ENCODE measurements at regions of chr4 and their contacts with region 1.

Region 1: GRCh38 chr4:168923526-168924194 is 86.4 kb downstream of the CBR4 start:
- DNase-seq: peak in 1 of 2 experiments; percentile 62
- H3K4me3 ChIP-seq: no peak overlapping the region
- H3K27ac ChIP-seq: no peak overlapping the region
- H3K4me1 ChIP-seq: peaks cover 0 to 14% (median 9%) of the 10 kb centered on the region in 4 experiments; a peak in 4 of 7 replicates
- H3K27me3 ChIP-seq: peaks cover 0 to 1% (median 0%) of the 10 kb centered on the region in 4 experiments; a peak in 1 of 7 replicates
- CTCF ChIP-seq: peak in 2 of 3 experiments; percentile 74 to 81; a peak in 3 of 4 replicates
- EP300 ChIP-seq: no peak
- POLR2A ChIP-seq: no peak
- RAD21 ChIP-seq: peak; percentile 84 to 85

Region 2: DNA sequence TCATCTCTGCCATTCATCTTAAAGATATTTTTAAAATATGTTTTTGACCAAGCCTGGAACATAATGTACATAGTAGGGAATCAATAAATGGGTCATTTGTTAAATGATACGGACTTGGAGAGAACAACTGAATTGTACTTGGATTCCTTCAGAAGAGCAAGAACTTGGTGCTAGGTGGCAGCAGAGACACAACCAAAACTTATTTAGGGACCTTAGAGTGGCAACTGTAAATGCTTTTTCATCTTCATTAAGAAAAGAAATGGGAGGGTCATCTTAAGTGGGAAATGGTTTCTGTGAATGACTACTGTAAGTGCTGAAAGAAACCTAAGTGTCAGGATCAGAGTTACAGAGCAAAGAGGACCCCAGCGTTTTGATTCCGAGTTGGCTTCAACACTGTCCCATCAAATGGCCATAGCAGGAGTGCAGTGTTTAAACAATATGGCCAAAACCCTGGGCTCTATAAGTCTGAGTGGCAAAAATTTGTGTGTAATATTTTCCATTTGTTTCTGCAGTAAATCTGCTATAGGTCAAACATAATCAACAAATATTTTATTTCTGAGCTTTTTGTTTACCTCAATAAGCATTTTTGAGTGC is 213.2 kb before region 1 on chr4:
- CTCF ChIA-PET with region 1: interaction called, 84 read pairs
- POLR2A ChIA-PET with region 1: no interaction called
- DNase-seq: no peak
- H3K4me3 ChIP-seq: no peak overlapping the region
- H3K27ac ChIP-seq: no peak overlapping the region
- H3K4me1 ChIP-seq: no peaks in the 10 kb centered on the region
- H3K27me3 ChIP-seq: peaks cover 0 to 3% (median 0%) of the 10 kb centered on the region in 4 experiments; a peak in 2 of 7 replicates
- CTCF ChIP-seq: peak in 2 of 3 experiments; percentile 54 to 66; a peak in 3 of 4 replicates
- EP300 ChIP-seq: no peak
- POLR2A ChIP-seq: no peak
- RAD21 ChIP-seq: peak; percentile 83 to 87

Region 3: DNA sequence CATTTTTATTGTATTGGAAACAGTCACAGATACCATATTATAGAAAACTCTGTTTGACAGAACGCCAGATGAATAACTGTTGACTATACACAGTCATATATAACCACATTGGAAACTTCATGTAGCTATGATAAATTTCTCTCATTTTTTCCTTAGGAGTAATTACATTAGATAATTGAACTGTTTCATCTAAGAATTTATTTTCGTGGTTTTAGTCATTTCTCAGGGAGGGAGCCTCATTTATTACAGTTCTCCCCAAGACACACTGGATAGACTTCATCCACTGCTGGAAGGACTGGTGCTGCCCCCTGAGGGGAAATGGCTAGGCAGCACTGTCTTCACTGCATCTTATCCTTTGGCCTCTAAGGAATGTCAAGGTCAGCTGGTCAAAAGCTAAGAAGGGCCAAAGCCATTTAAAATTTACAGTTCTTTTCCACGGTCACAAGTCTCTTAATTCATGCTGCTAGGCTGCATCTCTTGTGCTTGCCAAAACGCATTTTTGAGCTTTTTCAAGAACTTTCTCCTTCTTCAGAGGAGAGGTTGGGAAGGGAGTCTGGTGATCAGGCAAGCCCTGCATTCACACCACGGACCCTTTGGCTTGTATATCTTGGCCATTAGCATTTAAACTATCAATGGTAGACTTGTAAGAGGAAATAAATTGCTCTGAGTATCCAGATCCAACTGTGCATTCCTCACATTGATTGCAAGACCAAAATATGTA is 58.7 kb before region 1 on chr4:
- CTCF ChIA-PET with region 1: interaction called, 12 read pairs
- POLR2A ChIA-PET with region 1: no interaction called
- DNase-seq: no peak
- H3K4me3 ChIP-seq: no peak overlapping the region
- H3K27ac ChIP-seq: no peak overlapping the region
- H3K4me1 ChIP-seq: peaks cover 0 to 8% (median 4%) of the 10 kb centered on the region in 4 experiments; a peak in 2 of 7 replicates
- H3K27me3 ChIP-seq: no peaks in the 10 kb centered on the region
- CTCF ChIP-seq: peak; percentile 48 to 64 (median 63)
- EP300 ChIP-seq: no peak
- POLR2A ChIP-seq: no peak
- RAD21 ChIP-seq: peak; percentile 67 to 72

Region 4: GRCh38 chr4:168907119-168907698 is 16.5 kb before region 1 on chr4:
- CTCF ChIA-PET with region 1: interaction called, 60 read pairs
- POLR2A ChIA-PET with region 1: no interaction called
- DNase-seq: no peak
- H3K4me3 ChIP-seq: no peak overlapping the region
- H3K27ac ChIP-seq: no peak overlapping the region
- H3K4me1 ChIP-seq: no peaks in the 10 kb centered on the region
- H3K27me3 ChIP-seq: no peaks in the 10 kb centered on the region; a peak in 1 of 7 replicates
- CTCF ChIP-seq: no peak
- EP300 ChIP-seq: no peak
- POLR2A ChIP-seq: no peak
- RAD21 ChIP-seq: no peak

Region 5: GRCh38 chr4:168978001-168978700 is 54.5 kb after region 1 on chr4:
- CTCF ChIA-PET with region 1: interaction called, 14 read pairs
- POLR2A ChIA-PET with region 1: no interaction called
- DNase-seq: no peak
- H3K4me3 ChIP-seq: no peak overlapping the region
- H3K27ac ChIP-seq: no peak overlapping the region
- H3K4me1 ChIP-seq: no peaks in the 10 kb centered on the region
- H3K27me3 ChIP-seq: no peaks in the 10 kb centered on the region
- CTCF ChIP-seq: no peak
- EP300 ChIP-seq: no peak
- POLR2A ChIP-seq: no peak
- RAD21 ChIP-seq: no peak

Region 6: GRCh38 chr4:169010125-169011023 is 86.7 kb after region 1 on chr4 and contains the start of gene CBR4:
- CTCF ChIA-PET with region 1: interaction called, 38 read pairs
- POLR2A ChIA-PET with region 1: interaction called, 3 read pairs
- DNase-seq: peak; percentile 88 to 98
- H3K4me3 ChIP-seq: peak within 1 kb of the TSS; percentile 78 to 89 (median 88)
- H3K27ac ChIP-seq: peak within 1 kb of the TSS; percentile 88
- H3K4me1 ChIP-seq: peaks cover 0 to 3% (median under 1%) of the 10 kb centered on the region in 4 experiments; a peak in 3 of 7 replicates
- H3K27me3 ChIP-seq: no peaks in the 10 kb centered on the region
- CTCF ChIP-seq: peak; percentile 8 to 15 (median 13); a peak in 3 of 4 replicates
- EP300 ChIP-seq: no peak
- POLR2A ChIP-seq: peak; percentile 38 to 70
- RAD21 ChIP-seq: peak; percentile 4 to 6; a peak in 1 of 4 replicates
- total RNA-seq, gene CBR4: 29.5 and 30.6 TPM in 2 replicates

Region 7: GRCh38 chr4:169059306-169060211 is 135.9 kb after region 1 on chr4:
- CTCF ChIA-PET with region 1: no interaction called
- POLR2A ChIA-PET with region 1: no interaction called
- DNase-seq: no peak
- H3K4me3 ChIP-seq: no peak overlapping the region
- H3K27ac ChIP-seq: no peak overlapping the region
- H3K4me1 ChIP-seq: no peaks in the 10 kb centered on the region
- H3K27me3 ChIP-seq: no peaks in the 10 kb centered on the region
- CTCF ChIP-seq: no peak
- EP300 ChIP-seq: no peak
- POLR2A ChIP-seq: no peak
- RAD21 ChIP-seq: no peak